Vagina (tissue), 2 donors: ENCODE measurements at regions of chr9 and their contacts with region 1.

Region 1: DNA sequence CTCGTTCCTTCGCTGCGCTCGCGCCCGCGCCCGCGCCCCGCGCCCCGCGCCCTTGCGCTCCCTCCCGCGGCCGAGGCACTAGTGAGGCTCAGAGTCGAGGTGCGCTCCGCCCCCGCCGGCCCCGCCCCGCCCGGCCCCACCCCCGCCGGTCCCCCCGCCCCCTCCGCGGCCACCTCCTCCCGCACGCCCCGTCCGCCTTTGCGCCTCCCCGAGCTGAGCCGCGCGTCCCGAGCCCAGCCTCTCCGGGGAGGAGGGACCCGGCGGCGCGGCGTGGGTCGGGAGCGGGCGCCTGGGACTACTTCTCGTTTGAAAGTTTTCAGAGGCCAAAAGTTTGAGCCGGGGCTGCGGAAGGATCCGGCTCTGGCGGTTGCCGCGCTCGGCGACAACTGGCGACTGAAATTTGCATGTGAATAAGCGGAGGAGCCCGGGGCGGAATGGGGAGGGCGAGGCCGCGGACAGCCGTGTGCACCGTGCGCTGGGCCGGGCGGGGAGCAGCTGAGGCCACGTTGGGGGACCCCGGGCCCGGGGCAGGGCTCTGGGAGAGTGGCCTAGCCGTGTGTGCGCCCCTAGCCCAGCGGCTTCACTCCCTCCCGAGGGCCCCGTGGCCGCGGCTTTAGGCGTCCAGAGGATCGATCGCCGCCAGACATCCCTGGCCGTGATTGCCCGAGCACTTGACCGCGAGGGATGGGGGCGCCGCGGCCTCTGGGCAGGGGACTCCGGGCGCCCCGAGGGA is at the start of gene NOTCH1:
- DNase-seq: no peak
- H3K4me3 ChIP-seq: peak within 1 kb of the TSS; percentile 73 to 99
- H3K27ac ChIP-seq: peak within 1 kb of the TSS; percentile 98
- H3K4me1 ChIP-seq: peaks cover 81% of the 10 kb centered on the region
- H3K27me3 ChIP-seq: no peaks in the 10 kb centered on the region
- CTCF ChIP-seq: no peak
- POLR2A ChIP-seq: peak in 1 of 2 donors; percentile 85
- total RNA-seq, gene NOTCH1: 67.0 TPM

Region 2: GRCh38 chr9:136493567-136493971 is 52.6 kb before region 1 on chr9:
- intact Hi-C with region 1: loop called (anchors 10 kb)
- DNase-seq: no peak
- H3K4me3 ChIP-seq: no peak overlapping the region
- H3K27ac ChIP-seq: no peak overlapping the region
- H3K4me1 ChIP-seq: no peaks in the 10 kb centered on the region
- H3K27me3 ChIP-seq: no peaks in the 10 kb centered on the region
- CTCF ChIP-seq: no peak
- POLR2A ChIP-seq: no peak